ENCODE measurements at regions of chr12 and their contacts with region 1.

Region 1: GRCh38 chr12:80269803-80270552 is 170.6 kb downstream of the OTOGL start:
- DNase-seq: peak; percentile 67
- H3K4me3 Mint-ChIP-seq: no peak overlapping the region
- H3K27ac Mint-ChIP-seq: no peak overlapping the region
- H3K4me1 Mint-ChIP-seq: no peaks in the 10 kb centered on the region
- H3K27me3 Mint-ChIP-seq: peaks cover 2% of the 10 kb centered on the region

Region 2: GRCh38 chr12:79547735-79548609 is 722.0 kb before region 1 on chr12:
- intact Hi-C with region 1: loop called (anchors 2 kb)
- DNase-seq: peak; percentile 66
- H3K4me3 Mint-ChIP-seq: no peak overlapping the region
- H3K27ac Mint-ChIP-seq: no peak overlapping the region
- H3K4me1 Mint-ChIP-seq: no peaks in the 10 kb centered on the region
- H3K27me3 Mint-ChIP-seq: no peaks in the 10 kb centered on the region

Region 3: DNA sequence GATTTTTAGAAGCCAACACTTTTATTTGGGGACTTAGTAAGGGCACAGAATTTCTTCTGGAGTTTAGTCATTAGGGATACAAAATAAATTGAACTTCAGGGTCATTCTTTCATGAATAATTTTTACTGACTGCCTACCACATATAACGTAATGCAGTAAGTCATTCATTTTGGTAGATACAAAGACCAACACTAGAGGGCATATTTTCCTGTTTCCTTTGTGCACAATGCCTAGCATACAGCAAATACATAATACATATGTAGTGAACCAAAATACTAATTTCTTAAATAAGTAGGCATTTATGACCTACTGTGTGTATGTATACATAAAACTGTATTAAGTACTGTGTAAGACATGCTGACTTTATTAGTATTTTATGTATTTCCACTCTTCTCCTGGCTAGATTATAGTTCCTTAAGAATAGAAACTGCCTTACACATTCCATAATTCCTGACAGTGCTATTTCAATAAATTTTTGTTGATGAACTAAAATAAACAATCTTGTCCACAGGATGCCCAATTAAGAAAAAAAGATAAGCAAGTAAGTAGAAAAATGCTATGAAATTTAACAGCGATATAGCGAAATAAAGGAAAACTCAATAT is 383.0 kb before region 1 on chr12:
- intact Hi-C with region 1: loop called (anchors 10 kb)
- DNase-seq: no peak
- H3K4me3 Mint-ChIP-seq: no peak overlapping the region
- H3K27ac Mint-ChIP-seq: no peak overlapping the region
- H3K4me1 Mint-ChIP-seq: peaks cover 21% of the 10 kb centered on the region
- H3K27me3 Mint-ChIP-seq: no peaks in the 10 kb centered on the region

Region 4: GRCh38 chr12:80212938-80213645 is 56.9 kb before region 1 on chr12:
- intact Hi-C with region 1: no loop called
- DNase-seq: no peak
- H3K4me3 Mint-ChIP-seq: no peak overlapping the region
- H3K27ac Mint-ChIP-seq: no peak overlapping the region
- H3K4me1 Mint-ChIP-seq: no peaks in the 10 kb centered on the region
- H3K27me3 Mint-ChIP-seq: peaks cover 4% of the 10 kb centered on the region